Heart left ventricle (tissue), 16 donors: ENCODE measurements at regions of chr7 and their contacts with region 1.

Region 1: GRCh38 chr7:154765118-154765517 is 237.8 kb downstream of the PAXIP1 start:
- DNase-seq: no peak
- ATAC-seq: no peak
- H3K4me3 ChIP-seq: no peak overlapping the region
- H3K27ac ChIP-seq: no peak overlapping the region
- H3K4me1 ChIP-seq: no peaks in the 10 kb centered on the region
- H3K27me3 ChIP-seq: peaks cover 0 to 7% (median 0%) of the 10 kb centered on the region in 9 donors
- CTCF ChIP-seq: no peak
- POLR2A ChIP-seq: no peak

Region 2: GRCh38 chr7:154709840-154710520 is 55.1 kb before region 1 on chr7:
- intact Hi-C with region 1: loop called in 1 of 10 experiments (anchors 2 kb)
- DNase-seq: no peak
- ATAC-seq: no peak
- H3K4me3 ChIP-seq: no peak overlapping the region
- H3K27ac ChIP-seq: no peak overlapping the region
- H3K4me1 ChIP-seq: no peaks in the 10 kb centered on the region
- H3K27me3 ChIP-seq: peaks cover 0 to 3% (median 0%) of the 10 kb centered on the region in 9 donors
- CTCF ChIP-seq: no peak
- POLR2A ChIP-seq: no peak